Heart left ventricle (tissue), 16 donors: ENCODE measurements at regions of chr15 and their contacts with region 1.

Region 1: GRCh38 chr15:39171944-39172368 is 408.9 kb upstream of the THBS1 start:
- DNase-seq: peak in 4 of 5 donors; percentile 38 to 64 (median 48)
- ATAC-seq: peak; percentile 59 to 96 (median 94)
- H3K4me3 ChIP-seq: no peak overlapping the region
- H3K27ac ChIP-seq: peak overlapping the region in 7 of 12 donors; percentile 5 to 66 (median 23)
- H3K4me1 ChIP-seq: peaks cover 0 to 23% (median 8%) of the 10 kb centered on the region in 12 donors
- H3K27me3 ChIP-seq: no peaks in the 10 kb centered on the region
- CTCF ChIP-seq: peak; percentile 16 to 61 (median 42)
- POLR2A ChIP-seq: no peak

Region 2: GRCh38 chr15:38817427-38818156 is 354.4 kb before region 1 on chr15:
- intact Hi-C with region 1: loop called in 1 of 10 experiments (anchors 10 kb)
- DNase-seq: peak; percentile 69 to 89 (median 74)
- ATAC-seq: peak; percentile 80 to 94 (median 91)
- H3K4me3 ChIP-seq: no peak overlapping the region
- H3K27ac ChIP-seq: peak overlapping the region in 1 of 12 donors; percentile 8
- H3K4me1 ChIP-seq: peaks cover 0 to 9% (median 0%) of the 10 kb centered on the region in 12 donors
- H3K27me3 ChIP-seq: no peaks in the 10 kb centered on the region
- CTCF ChIP-seq: peak; percentile 97 to 100 (median 98)
- POLR2A ChIP-seq: no peak

Region 3: GRCh38 chr15:38899300-38899699 is 272.7 kb before region 1 on chr15:
- intact Hi-C with region 1: no loop called
- DNase-seq: no peak
- ATAC-seq: no peak
- H3K4me3 ChIP-seq: no peak overlapping the region
- H3K27ac ChIP-seq: no peak overlapping the region
- H3K4me1 ChIP-seq: peaks cover 0 to 33% (median 3%) of the 10 kb centered on the region in 12 donors
- H3K27me3 ChIP-seq: no peaks in the 10 kb centered on the region
- CTCF ChIP-seq: no peak
- POLR2A ChIP-seq: no peak

Region 4: GRCh38 chr15:39188925-39189324 is 17.0 kb after region 1 on chr15:
- intact Hi-C with region 1: loop called in 1 of 10 experiments (anchors 2 kb)
- DNase-seq: no peak
- ATAC-seq: peak in 1 of 4 donors; percentile 22
- H3K4me3 ChIP-seq: no peak overlapping the region
- H3K27ac ChIP-seq: no peak overlapping the region
- H3K4me1 ChIP-seq: peaks cover 0 to under 1% (median 0%) of the 10 kb centered on the region in 12 donors
- H3K27me3 ChIP-seq: no peaks in the 10 kb centered on the region
- CTCF ChIP-seq: no peak
- POLR2A ChIP-seq: no peak

Region 5: DNA sequence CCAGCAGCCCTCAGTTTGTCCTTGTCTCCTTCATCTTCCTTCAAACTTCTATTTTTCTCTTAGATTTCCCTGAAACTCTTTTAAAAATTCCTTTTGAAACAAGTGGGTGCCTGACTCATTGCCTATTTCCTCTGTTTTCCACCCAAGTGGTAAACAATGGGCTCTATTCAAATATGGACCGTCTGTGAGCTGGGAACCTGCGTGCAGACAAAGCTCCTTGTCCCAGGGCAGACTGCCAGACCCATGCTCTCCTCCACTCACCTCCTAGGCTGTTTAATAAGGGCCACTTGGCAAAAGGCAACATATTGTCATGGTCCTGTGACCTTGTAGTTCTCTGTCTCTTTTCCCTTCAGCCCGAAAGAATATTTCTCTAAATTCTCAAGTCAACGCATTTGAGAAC is 76.2 kb after region 1 on chr15:
- intact Hi-C with region 1: no loop called
- DNase-seq: peak; percentile 51 to 68 (median 62)
- ATAC-seq: peak; percentile 55 to 91 (median 78)
- H3K4me3 ChIP-seq: no peak overlapping the region
- H3K27ac ChIP-seq: peak overlapping the region in 9 of 12 donors; percentile 3 to 51 (median 30)
- H3K4me1 ChIP-seq: peaks cover 0 to 12% (median 2%) of the 10 kb centered on the region in 12 donors
- H3K27me3 ChIP-seq: no peaks in the 10 kb centered on the region
- CTCF ChIP-seq: no peak
- POLR2A ChIP-seq: no peak

Region 6: GRCh38 chr15:39358441-39359041 is 186.6 kb after region 1 on chr15:
- intact Hi-C with region 1: loop called in 1 of 10 experiments (anchors 10 kb)
- DNase-seq: peak in 4 of 5 donors; percentile 31 to 49 (median 44)
- ATAC-seq: peak; percentile 80 to 94 (median 90)
- H3K4me3 ChIP-seq: no peak overlapping the region
- H3K27ac ChIP-seq: peak overlapping the region; percentile 22 to 90 (median 74)
- H3K4me1 ChIP-seq: peaks cover 0 to 36% (median 14%) of the 10 kb centered on the region in 12 donors
- H3K27me3 ChIP-seq: no peaks in the 10 kb centered on the region
- CTCF ChIP-seq: no peak
- POLR2A ChIP-seq: no peak

Region 7: GRCh38 chr15:39429898-39430357 is 258.0 kb after region 1 on chr15:
- intact Hi-C with region 1: loop called in 1 of 10 experiments (anchors 10 kb)
- DNase-seq: no peak
- ATAC-seq: no peak
- H3K4me3 ChIP-seq: no peak overlapping the region
- H3K27ac ChIP-seq: peak overlapping the region in 7 of 12 donors; percentile 27 to 70 (median 34)
- H3K4me1 ChIP-seq: peaks cover 0 to 83% (median 37%) of the 10 kb centered on the region in 12 donors
- H3K27me3 ChIP-seq: no peaks in the 10 kb centered on the region
- CTCF ChIP-seq: no peak
- POLR2A ChIP-seq: no peak

Region 8: GRCh38 chr15:39666677-39667076 is 494.7 kb after region 1 on chr15:
- intact Hi-C with region 1: loop called in 1 of 10 experiments (anchors 10 kb)
- DNase-seq: no peak
- ATAC-seq: no peak
- H3K4me3 ChIP-seq: no peak overlapping the region
- H3K27ac ChIP-seq: no peak overlapping the region
- H3K4me1 ChIP-seq: peaks cover 0 to 11% (median 0%) of the 10 kb centered on the region in 12 donors
- H3K27me3 ChIP-seq: no peaks in the 10 kb centered on the region
- CTCF ChIP-seq: no peak
- POLR2A ChIP-seq: no peak